Activated CD4-positive, alpha-beta T cell treated with anti-CD3 and anti-CD28 coated beads, Interleukin-2, amount 10 ng/mL, durations not matched to agents 24 days and 14 days (primary cell): ENCODE measurements at regions of chr3 and their contacts with region 1.

Region 1: DNA sequence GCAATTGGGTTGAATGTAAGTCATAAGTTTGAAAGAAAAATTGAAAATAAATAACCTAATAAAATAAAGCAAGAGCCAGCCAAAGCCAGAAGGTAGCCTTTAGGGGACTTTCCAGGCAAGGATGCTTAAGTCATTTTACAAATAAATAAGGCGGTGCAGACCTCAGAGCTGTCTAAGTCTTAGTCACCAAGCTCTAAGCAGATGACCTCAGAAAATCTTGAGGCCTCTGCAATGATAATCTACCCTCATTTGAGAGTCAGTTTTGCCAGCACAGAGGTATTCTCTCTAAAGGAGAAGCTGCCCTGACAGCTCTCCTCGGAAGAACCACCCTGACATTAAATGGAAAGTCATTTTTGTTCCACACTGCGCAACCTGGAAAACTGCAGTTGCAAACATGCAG is 113.9 kb downstream of the OXNAD1 start:
- DNase-seq: peak; percentile 72
- H3K4me3 Mint-ChIP-seq: peak overlapping the region; percentile 49
- H3K27ac Mint-ChIP-seq: peak overlapping the region; percentile 90
- H3K4me1 Mint-ChIP-seq: peaks cover 67% of the 10 kb centered on the region
- H3K27me3 Mint-ChIP-seq: no peaks in the 10 kb centered on the region

Region 2: GRCh38 chr3:16309558-16309957 is 69.4 kb before region 1 on chr3:
- intact Hi-C with region 1: loop called (anchors 5 kb)
- DNase-seq: peak; percentile 87
- H3K4me3 Mint-ChIP-seq: peak overlapping the region; percentile 61
- H3K27ac Mint-ChIP-seq: peak overlapping the region; percentile 89
- H3K4me1 Mint-ChIP-seq: peaks cover 80% of the 10 kb centered on the region
- H3K27me3 Mint-ChIP-seq: no peaks in the 10 kb centered on the region

Region 3: GRCh38 chr3:16349986-16350596 is 28.8 kb before region 1 on chr3:
- intact Hi-C with region 1: no loop called
- DNase-seq: no peak
- H3K4me3 Mint-ChIP-seq: no peak overlapping the region
- H3K27ac Mint-ChIP-seq: no peak overlapping the region
- H3K4me1 Mint-ChIP-seq: peaks cover 26% of the 10 kb centered on the region
- H3K27me3 Mint-ChIP-seq: no peaks in the 10 kb centered on the region

Region 4: DNA sequence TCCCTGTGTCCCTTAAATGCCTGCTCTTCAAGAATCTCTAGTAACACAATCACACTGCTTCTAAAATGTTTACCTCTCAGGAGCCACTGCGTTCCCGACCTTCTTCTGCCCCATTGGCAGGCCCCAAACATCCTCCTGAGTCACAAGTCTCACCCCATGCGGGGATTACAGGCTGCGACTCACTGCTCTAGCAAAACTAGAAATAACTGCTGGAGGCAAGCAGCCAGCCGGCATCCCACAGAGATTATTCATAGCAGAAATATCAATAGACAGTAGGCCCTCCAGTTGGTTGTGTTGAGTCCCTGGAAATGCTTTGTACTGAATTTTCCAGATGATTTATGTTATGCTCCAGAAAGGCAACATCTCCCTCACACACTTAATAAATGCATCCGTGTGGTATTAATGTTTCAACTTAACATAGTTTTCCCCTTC is 69.7 kb after region 1 on chr3:
- intact Hi-C with region 1: loop called (anchors 5 kb)
- DNase-seq: no peak
- H3K4me3 Mint-ChIP-seq: no peak overlapping the region
- H3K27ac Mint-ChIP-seq: peak overlapping the region; percentile 60
- H3K4me1 Mint-ChIP-seq: peaks cover 46% of the 10 kb centered on the region
- H3K27me3 Mint-ChIP-seq: no peaks in the 10 kb centered on the region

Region 5: GRCh38 chr3:16467393-16467792 is 88.5 kb after region 1 on chr3:
- intact Hi-C with region 1: loop called (anchors 5 kb)
- DNase-seq: peak; percentile 88
- H3K4me3 Mint-ChIP-seq: peak overlapping the region; percentile 78
- H3K27ac Mint-ChIP-seq: peak overlapping the region; percentile 94
- H3K4me1 Mint-ChIP-seq: peaks cover 64% of the 10 kb centered on the region
- H3K27me3 Mint-ChIP-seq: no peaks in the 10 kb centered on the region

Region 6: GRCh38 chr3:16945330-16945729 is 566.4 kb after region 1 on chr3:
- intact Hi-C with region 1: no loop called
- DNase-seq: no peak
- H3K4me3 Mint-ChIP-seq: no peak overlapping the region
- H3K27ac Mint-ChIP-seq: no peak overlapping the region
- H3K4me1 Mint-ChIP-seq: peaks cover 20% of the 10 kb centered on the region
- H3K27me3 Mint-ChIP-seq: no peaks in the 10 kb centered on the region